Activated CD8-positive, alpha-beta memory T cell treated with anti-CD3 and anti-CD28 coated beads, Interleukin-2, amount 10 ng/mL, durations not matched to agents 7 days and 5 days (primary cell): ENCODE measurements at regions of chr1 and their contacts with region 1.

Region 1: DNA sequence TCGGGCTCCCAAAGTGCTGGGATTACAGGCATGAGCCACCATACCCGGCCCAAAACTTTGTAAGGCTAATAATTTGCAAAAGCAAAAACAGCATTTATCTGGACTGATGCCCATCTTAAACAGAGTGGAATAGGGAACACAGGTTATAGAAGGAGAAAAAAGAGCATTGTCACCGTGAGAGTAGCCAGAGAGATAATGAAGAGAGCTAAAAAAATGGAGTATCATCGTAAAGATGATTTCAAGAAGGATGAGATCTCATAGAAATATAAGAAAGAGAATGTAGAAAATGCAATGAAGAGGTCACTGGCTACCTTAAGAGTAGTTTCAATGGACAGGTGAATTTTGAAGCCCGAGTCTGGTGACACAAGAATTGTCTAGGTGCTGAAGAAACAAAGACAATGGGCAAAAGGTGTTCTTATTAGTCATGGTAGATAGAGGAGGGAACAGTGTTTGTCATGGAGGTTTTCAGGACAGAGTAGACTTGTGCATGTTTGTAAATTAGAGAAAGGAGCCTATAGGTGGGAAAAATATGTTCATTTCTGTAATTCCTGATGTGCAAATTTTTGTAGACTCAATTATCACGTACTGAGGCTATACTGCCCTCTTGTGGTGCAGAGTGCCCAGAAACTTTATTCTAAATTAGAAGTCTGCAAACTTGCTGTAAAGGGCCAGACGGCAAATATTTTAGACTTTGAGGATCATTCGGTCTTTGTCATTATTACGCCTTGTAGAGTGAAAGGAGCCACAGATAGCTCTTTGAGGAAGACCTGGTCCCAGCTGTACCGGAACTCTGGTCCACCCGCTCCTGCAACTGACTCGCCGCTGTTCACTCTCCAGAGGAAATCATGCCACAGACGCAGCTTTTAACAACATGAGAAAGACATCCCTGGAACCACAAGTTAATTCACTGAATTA is 8.1 kb upstream of the TMEM183A start:
- DNase-seq: peak; percentile 74
- ATAC-seq: peak; percentile 67
- H3K4me3 Mint-ChIP-seq: peak overlapping the region; percentile 54
- H3K27ac Mint-ChIP-seq: peak overlapping the region; percentile 39
- H3K4me1 Mint-ChIP-seq: peaks cover 17% of the 10 kb centered on the region
- H3K27me3 Mint-ChIP-seq: peaks cover 42% of the 10 kb centered on the region

Region 2: DNA sequence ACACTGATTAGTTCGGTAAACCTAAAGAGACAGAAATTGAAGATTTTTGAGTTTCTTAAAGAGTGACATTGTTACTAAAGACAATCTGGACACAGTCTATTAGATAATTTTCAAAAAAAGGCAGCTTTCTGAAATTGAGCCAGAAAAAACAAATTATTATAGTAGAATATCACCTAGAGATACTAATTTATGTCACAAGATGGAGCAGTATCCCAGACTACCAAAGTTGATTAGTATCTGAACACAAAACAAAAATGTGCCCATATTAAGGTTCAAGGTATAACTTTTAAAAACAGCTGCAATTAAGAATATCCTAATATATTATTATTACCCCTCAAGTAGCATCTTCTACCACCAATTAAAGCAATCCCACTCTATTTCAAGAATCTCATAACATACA is 248.3 kb before region 1 on chr1:
- CTCF ChIA-PET with region 1: interaction called, 23 read pairs
- DNase-seq: no peak
- ATAC-seq: no peak
- H3K4me3 Mint-ChIP-seq: no peak overlapping the region
- H3K27ac Mint-ChIP-seq: no peak overlapping the region
- H3K4me1 Mint-ChIP-seq: no peaks in the 10 kb centered on the region
- H3K27me3 Mint-ChIP-seq: no peaks in the 10 kb centered on the region

Region 3: GRCh38 chr1:202810615-202811295 is 188.3 kb before region 1 on chr1 and contains the start of gene PCAT6:
- CTCF ChIA-PET with region 1: no interaction called
- DNase-seq: peak; percentile 91
- ATAC-seq: peak; percentile 81
- H3K4me3 Mint-ChIP-seq: peak within 1 kb of the TSS; percentile 94
- H3K27ac Mint-ChIP-seq: peak within 1 kb of the TSS; percentile 59
- H3K4me1 Mint-ChIP-seq: peaks cover 41% of the 10 kb centered on the region
- H3K27me3 Mint-ChIP-seq: peaks cover 38% of the 10 kb centered on the region
- total RNA-seq, gene PCAT6: 0.58 to 0.94 TPM

Region 4: DNA sequence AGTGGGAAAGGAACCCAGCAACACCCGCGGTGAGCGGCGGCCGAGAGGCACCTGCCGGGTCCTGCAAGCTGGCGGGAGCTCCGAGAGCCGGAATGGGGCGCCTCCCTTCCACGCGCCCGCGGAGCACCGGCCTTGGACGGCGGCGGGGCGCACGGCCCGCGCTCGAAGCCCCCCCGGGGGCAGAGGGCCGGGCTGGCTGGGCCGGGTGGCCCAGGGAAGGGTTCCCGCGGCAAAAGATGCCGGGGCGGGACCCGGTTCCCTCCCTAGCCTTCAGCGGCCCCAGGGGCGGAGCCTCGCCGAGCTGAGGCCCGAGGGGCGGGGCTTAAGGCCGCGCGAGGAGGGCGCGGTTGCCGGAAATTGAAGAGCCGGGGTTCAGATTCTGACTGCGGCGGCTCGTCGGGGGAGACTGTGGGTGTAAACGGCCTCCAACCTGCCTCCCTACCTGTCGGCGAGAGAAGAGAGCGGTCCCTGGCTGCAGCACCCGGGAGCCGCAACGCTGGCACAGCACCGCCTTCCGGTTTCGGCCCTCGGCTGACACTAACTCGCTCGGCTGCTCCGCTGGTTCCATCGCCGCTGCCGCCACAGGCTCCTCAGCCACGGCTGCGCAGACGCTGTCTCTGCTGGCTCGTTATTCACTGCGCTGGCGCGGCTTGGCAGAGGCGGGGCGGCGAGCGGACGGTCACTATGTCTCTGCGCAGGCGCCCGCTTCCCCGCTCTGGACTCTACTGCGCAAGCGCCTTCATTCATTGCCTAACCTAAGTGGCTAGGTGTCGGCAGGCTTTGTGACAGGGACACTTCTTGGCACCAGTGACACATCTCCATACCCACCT is 110.3 kb before region 1 on chr1 and contains the start of gene RABIF:
- CTCF ChIA-PET with region 1: interaction called, 14 read pairs
- DNase-seq: peak; percentile 98
- ATAC-seq: peak; percentile 95
- H3K4me3 Mint-ChIP-seq: peak within 1 kb of the TSS; percentile 95
- H3K27ac Mint-ChIP-seq: peak within 1 kb of the TSS; percentile 99
- H3K4me1 Mint-ChIP-seq: peaks cover 23% of the 10 kb centered on the region
- H3K27me3 Mint-ChIP-seq: no peaks in the 10 kb centered on the region
- total RNA-seq, gene RABIF: 11.5 to 15.3 TPM

Region 5: DNA sequence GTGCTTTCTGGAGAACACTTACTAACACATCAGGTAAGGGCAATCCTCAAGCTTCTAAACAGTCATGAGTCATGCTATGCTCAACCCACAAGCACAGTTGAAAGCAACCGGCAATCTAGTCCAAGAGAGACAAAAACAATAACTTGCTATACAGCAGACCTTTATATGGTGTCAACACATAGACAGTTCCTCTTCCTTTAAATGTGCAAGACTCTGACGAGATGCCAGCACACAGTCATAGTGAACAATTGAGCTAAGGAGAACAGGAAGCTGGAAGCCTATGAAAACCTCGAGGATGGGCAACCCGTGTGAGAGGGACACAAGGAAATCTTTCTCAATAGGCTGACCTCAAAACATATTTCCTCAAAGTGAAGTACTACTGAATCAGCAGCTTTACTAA is 46.3 kb before region 1 on chr1:
- CTCF ChIA-PET with region 1: interaction called, 15 read pairs
- DNase-seq: no peak
- ATAC-seq: peak; percentile 59
- H3K4me3 Mint-ChIP-seq: no peak overlapping the region
- H3K27ac Mint-ChIP-seq: peak overlapping the region; percentile 30
- H3K4me1 Mint-ChIP-seq: peaks cover 43% of the 10 kb centered on the region
- H3K27me3 Mint-ChIP-seq: no peaks in the 10 kb centered on the region

Region 6: GRCh38 chr1:202968840-202969295 is 30.2 kb before region 1 on chr1:
- CTCF ChIA-PET with region 1: interaction called, 14 read pairs
- DNase-seq: peak; percentile 52
- ATAC-seq: peak; percentile 32
- H3K4me3 Mint-ChIP-seq: no peak overlapping the region
- H3K27ac Mint-ChIP-seq: no peak overlapping the region
- H3K4me1 Mint-ChIP-seq: peaks cover 25% of the 10 kb centered on the region
- H3K27me3 Mint-ChIP-seq: peaks cover 5% of the 10 kb centered on the region